CD4-positive, alpha-beta T cell (primary cell): ENCODE measurements at regions of chr1 and their contacts with region 1.

Region 1: GRCh38 chr1:16095447-16095846 is 22.0 kb upstream of the FAM131C start:
- DNase-seq: no peak
- ATAC-seq: no peak
- H3K4me3 ChIP-seq: no peak overlapping the region
- H3K4me3 Mint-ChIP-seq: no peak overlapping the region
- H3K27ac ChIP-seq: no peak overlapping the region
- H3K27ac Mint-ChIP-seq: no peak overlapping the region
- H3K4me1 ChIP-seq: no peaks in the 10 kb centered on the region
- H3K4me1 Mint-ChIP-seq: no peaks in the 10 kb centered on the region
- H3K27me3 ChIP-seq: no peaks in the 10 kb centered on the region
- H3K27me3 Mint-ChIP-seq: no peaks in the 10 kb centered on the region
- CTCF ChIP-seq: no peak

Region 2: GRCh38 chr1:16006552-16007485 is 88.6 kb before region 1 on chr1:
- CTCF ChIA-PET with region 1: no interaction called
- POLR2A ChIA-PET with region 1: no interaction called
- intact Hi-C with region 1: no loop called
- DNase-seq: peak in 1 of 14 experiments; percentile 17
- ATAC-seq: peak; percentile 44
- H3K4me3 ChIP-seq: no peak overlapping the region
- H3K4me3 Mint-ChIP-seq: no peak overlapping the region
- H3K27ac ChIP-seq: no peak overlapping the region
- H3K27ac Mint-ChIP-seq: no peak overlapping the region
- H3K4me1 ChIP-seq: no peaks in the 10 kb centered on the region
- H3K4me1 Mint-ChIP-seq: no peaks in the 10 kb centered on the region
- H3K27me3 ChIP-seq: no peaks in the 10 kb centered on the region
- H3K27me3 Mint-ChIP-seq: peaks cover 4% of the 10 kb centered on the region
- CTCF ChIP-seq: no peak

Region 3: GRCh38 chr1:16143566-16144324 is 48.3 kb after region 1 on chr1:
- CTCF ChIA-PET with region 1: no interaction called
- POLR2A ChIA-PET with region 1: no interaction called
- intact Hi-C with region 1: loop called in 1 of 2 experiments (anchors 5 kb)
- DNase-seq: no peak
- ATAC-seq: no peak
- H3K4me3 ChIP-seq: no peak overlapping the region
- H3K4me3 Mint-ChIP-seq: no peak overlapping the region
- H3K27ac ChIP-seq: no peak overlapping the region
- H3K27ac Mint-ChIP-seq: no peak overlapping the region
- H3K4me1 ChIP-seq: peaks cover 9% of the 10 kb centered on the region
- H3K4me1 Mint-ChIP-seq: no peaks in the 10 kb centered on the region
- H3K27me3 ChIP-seq: no peaks in the 10 kb centered on the region
- H3K27me3 Mint-ChIP-seq: no peaks in the 10 kb centered on the region
- CTCF ChIP-seq: no peak